Common myeloid progenitor, CD34-positive (primary cell): ENCODE measurements at regions of chr4 and their contacts with region 1.

Region 1: GRCh38 chr4:139403462-139403861 is 50.5 kb upstream of the RAB33B start:
- DNase-seq: peak; percentile 25 to 54 (median 54)
- H3K4me3 ChIP-seq: no peak overlapping the region
- H3K27ac ChIP-seq: no peak overlapping the region
- H3K4me1 ChIP-seq: no peaks in the 10 kb centered on the region
- H3K27me3 ChIP-seq: no peaks in the 10 kb centered on the region

Region 2: DNA sequence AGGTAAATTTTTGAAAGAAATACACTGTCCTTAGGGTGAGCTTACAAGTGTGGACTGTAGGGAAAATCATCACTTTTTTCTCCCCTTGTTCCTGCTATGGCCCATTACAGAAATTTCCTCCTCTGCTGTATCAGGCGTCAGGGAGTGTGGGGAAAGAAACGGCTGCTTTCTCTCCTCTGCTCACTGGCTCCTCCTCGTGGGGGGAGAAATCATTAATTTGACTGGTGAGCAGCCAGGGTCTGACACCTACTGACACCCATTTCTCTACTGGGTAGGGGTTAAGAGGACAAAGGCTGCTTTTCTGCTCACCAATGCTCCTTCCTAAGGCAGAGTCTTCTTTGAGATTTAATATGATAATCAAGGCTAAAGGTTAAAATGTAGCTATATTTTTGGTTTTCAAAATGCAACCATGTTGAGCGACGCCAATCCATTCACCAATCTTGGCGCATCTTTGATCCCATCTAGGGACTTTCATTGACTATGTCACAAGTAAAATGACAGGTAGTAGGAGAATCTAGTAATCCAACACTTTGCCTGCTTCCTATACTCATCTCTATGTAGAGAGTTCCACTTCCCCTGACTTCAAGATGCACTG is 127.5 kb after region 1 on chr4:
- CTCF ChIA-PET with region 1: interaction called, 10 read pairs
- POLR2A ChIA-PET with region 1: no interaction called
- DNase-seq: peak; percentile 48 to 65 (median 60)
- H3K4me3 ChIP-seq: no peak overlapping the region
- H3K27ac ChIP-seq: no peak overlapping the region
- H3K4me1 ChIP-seq: peaks cover 6 to 15% (median 12%) of the 10 kb centered on the region in 4 experiments
- H3K27me3 ChIP-seq: no peaks in the 10 kb centered on the region

Region 3: GRCh38 chr4:139554893-139555704 is 151.6 kb after region 1 on chr4:
- CTCF ChIA-PET with region 1: no interaction called
- POLR2A ChIA-PET with region 1: no interaction called
- DNase-seq: peak; percentile 84 to 96 (median 95)
- H3K4me3 ChIP-seq: peak overlapping the region; percentile 76 to 92 (median 89)
- H3K27ac ChIP-seq: peak overlapping the region; percentile 11 to 76
- H3K4me1 ChIP-seq: peaks cover 7 to 57% (median 29%) of the 10 kb centered on the region in 4 experiments
- H3K27me3 ChIP-seq: peaks cover 0 to 8% (median 3%) of the 10 kb centered on the region in 5 experiments